ENCODE measurements at regions of chr21 and their contacts with region 1.

Region 1: GRCh38 chr21:31180256-31181081 is 142.2 kb upstream of the KRTAP19-8 start:
- DNase-seq: no peak
- ATAC-seq: peak; percentile 71

Region 2: DNA sequence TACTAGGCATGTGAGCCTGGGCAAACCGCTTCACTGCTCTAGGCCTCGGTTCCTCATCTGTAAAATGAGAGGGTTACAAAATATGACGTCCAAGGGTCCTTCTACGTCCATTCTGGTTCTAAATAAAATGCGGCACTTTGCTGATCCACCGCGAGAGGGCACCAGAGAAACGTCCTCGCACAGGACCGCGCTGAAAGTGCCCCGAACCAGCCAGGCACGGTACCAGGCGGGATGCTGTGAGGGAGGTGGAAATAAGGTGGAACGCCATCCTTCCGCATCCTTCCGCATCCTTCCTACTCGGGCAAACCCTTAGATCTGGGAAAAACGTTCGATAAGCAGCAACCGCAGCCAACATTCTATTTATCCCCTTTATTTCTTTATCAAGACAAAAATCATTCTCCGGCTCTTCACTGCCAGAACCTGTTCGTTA is 81.9 kb before region 1 on chr21:
- intact Hi-C with region 1: loop called (anchors 5 kb)
- DNase-seq: peak; percentile 80
- ATAC-seq: peak; percentile 82

Region 3: DNA sequence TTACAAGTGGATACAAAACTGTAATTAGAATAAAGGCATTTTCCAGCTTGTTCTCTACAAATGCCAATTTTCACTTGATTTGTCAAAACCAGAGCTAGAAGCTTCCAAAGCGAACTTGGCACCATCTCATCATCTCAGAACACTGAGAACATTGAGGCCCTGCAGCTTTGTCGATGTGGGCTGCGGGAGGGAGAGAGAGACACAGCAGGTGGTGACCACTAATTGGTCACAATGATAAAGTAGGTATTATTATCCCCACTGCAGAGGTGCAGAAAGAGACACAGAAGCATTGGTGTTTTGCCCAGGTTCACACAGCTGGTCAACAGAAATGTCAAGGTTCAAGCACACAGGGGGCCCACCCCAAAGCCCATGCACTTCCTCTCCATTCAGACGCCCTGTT is 70.0 kb before region 1 on chr21:
- intact Hi-C with region 1: loop called (anchors 5 kb)
- DNase-seq: no peak
- ATAC-seq: no peak

Measured in Right ventricle myocardium superior (tissue), 1 donor.